Calu3 (cell line): ENCODE measurements at regions of chr6 and their contacts with region 1.

Region 1: GRCh38 chr6:47188588-47189021 is 121.1 kb downstream of the TNFRSF21 start:
- DNase-seq: peak; percentile 72
- H3K4me3 Mint-ChIP-seq: peak overlapping the region; percentile 9
- H3K27ac Mint-ChIP-seq: peak overlapping the region; percentile 71
- H3K4me1 Mint-ChIP-seq: peaks cover 45% of the 10 kb centered on the region
- H3K27me3 Mint-ChIP-seq: no peaks in the 10 kb centered on the region
- CTCF ChIP-seq: no peak

Region 2: GRCh38 chr6:47103931-47104330 is 84.7 kb before region 1 on chr6:
- CTCF ChIA-PET with region 1: no interaction called
- intact Hi-C with region 1: loop called (anchors 2 kb)
- DNase-seq: peak; percentile 49
- H3K4me3 Mint-ChIP-seq: no peak overlapping the region
- H3K27ac Mint-ChIP-seq: peak overlapping the region; percentile 88
- H3K4me1 Mint-ChIP-seq: peaks cover 83% of the 10 kb centered on the region
- H3K27me3 Mint-ChIP-seq: no peaks in the 10 kb centered on the region
- CTCF ChIP-seq: no peak

Region 3: GRCh38 chr6:47134476-47135189 is 54.0 kb before region 1 on chr6:
- CTCF ChIA-PET with region 1: no interaction called
- intact Hi-C with region 1: loop called (anchors 1 kb)
- DNase-seq: peak; percentile 52
- H3K4me3 Mint-ChIP-seq: peak overlapping the region; percentile 18
- H3K27ac Mint-ChIP-seq: peak overlapping the region; percentile 94
- H3K4me1 Mint-ChIP-seq: peaks cover 81% of the 10 kb centered on the region
- H3K27me3 Mint-ChIP-seq: no peaks in the 10 kb centered on the region
- CTCF ChIP-seq: no peak

Region 4: DNA sequence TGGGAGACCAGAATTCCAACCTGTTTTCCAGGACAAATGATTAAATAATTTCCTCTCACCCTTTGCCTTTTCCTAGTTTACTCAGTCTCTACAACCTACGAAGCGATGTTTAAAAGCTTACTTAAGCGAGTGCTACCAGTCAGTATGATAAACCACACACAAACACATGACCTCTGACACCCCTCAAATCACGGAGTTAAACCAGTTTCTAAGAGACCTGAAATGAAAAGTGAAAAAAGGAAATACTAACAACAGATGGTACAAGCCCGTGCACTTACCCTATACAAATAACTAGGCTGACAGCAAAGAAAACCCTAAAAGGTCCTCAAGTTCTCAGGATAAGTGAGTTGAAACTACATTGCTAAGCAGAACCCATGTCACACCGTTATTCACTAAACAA is 113.4 kb after region 1 on chr6:
- CTCF ChIA-PET with region 1: no interaction called
- intact Hi-C with region 1: loop called (anchors 5 kb)
- DNase-seq: no peak
- H3K4me3 Mint-ChIP-seq: peak overlapping the region; percentile 98
- H3K27ac Mint-ChIP-seq: no peak overlapping the region
- H3K4me1 Mint-ChIP-seq: peaks cover 79% of the 10 kb centered on the region
- H3K27me3 Mint-ChIP-seq: no peaks in the 10 kb centered on the region
- CTCF ChIP-seq: no peak